ENCODE measurements at regions of chr3 and their contacts with region 1.

Region 1: DNA sequence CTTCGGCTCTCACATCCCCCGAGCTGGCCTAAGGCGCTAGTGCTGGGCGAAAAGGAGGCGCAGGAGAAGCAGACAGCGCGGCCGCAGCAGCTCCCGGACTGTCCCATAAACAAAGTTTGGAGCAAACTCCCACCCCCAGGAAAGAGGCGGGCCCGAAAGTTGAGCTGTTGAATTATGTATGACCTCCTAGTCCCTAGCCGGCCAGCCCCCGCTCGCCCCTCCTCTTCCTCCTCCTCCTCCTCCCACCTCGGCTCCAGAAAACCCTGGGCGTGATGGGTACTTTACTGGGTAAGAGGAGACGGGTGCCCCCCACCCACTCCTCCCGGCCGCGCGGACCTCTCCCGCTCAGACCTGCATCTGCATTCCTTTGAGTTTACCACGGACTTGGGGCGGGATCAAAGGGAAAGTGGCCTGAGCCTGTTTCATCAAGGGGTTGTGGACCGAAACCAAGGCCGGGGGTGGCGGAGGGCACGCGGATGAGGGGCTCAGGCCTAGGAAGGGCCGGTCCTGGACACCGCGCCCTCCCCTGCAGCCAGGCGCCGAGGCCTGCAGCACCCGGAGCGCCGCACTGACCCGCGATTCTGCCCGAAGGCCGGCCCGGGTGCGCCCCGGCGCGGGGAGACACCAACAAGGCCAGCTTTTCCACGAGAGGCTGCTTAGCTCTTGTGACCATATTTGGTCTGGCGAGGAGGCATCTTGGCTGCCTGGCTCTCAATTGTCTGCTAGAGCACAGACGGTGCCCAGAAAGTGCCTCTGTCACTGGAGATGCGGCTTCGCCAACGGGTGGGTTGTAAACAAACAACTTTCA is at the start of gene WWTR1:
- DNase-seq: peak; percentile 96 to 97
- H3K4me3 ChIP-seq: peak within 1 kb of the TSS; percentile 66 to 70 (median 68)
- H3K27ac ChIP-seq: peak within 1 kb of the TSS; percentile 98 to 100 (median 99)
- H3K4me1 ChIP-seq: peaks cover 32 to 35% of the 10 kb centered on the region in 2 donors
- H3K27me3 ChIP-seq: no peaks in the 10 kb centered on the region
- CTCF ChIP-seq: peak in 3 of 6 experiments; percentile 15 to 32 (median 19)
- POLR2A ChIP-seq: peak; percentile 90 to 99
- total RNA-seq, gene WWTR1: 56.7 to 87.6 (median 78.5) TPM

Region 2: GRCh38 chr3:149547938-149548668 is 110.0 kb before region 1 on chr3:
- intact Hi-C with region 1: loop called (anchors 10 kb)
- DNase-seq: peak; percentile 17 to 37
- H3K4me3 ChIP-seq: no peak overlapping the region
- H3K27ac ChIP-seq: peak overlapping the region in 2 of 3 donors; percentile 47 to 52
- H3K4me1 ChIP-seq: peaks cover 7 to 15% of the 10 kb centered on the region in 2 donors
- H3K27me3 ChIP-seq: no peaks in the 10 kb centered on the region
- CTCF ChIP-seq: no peak
- POLR2A ChIP-seq: no peak

Region 3: DNA sequence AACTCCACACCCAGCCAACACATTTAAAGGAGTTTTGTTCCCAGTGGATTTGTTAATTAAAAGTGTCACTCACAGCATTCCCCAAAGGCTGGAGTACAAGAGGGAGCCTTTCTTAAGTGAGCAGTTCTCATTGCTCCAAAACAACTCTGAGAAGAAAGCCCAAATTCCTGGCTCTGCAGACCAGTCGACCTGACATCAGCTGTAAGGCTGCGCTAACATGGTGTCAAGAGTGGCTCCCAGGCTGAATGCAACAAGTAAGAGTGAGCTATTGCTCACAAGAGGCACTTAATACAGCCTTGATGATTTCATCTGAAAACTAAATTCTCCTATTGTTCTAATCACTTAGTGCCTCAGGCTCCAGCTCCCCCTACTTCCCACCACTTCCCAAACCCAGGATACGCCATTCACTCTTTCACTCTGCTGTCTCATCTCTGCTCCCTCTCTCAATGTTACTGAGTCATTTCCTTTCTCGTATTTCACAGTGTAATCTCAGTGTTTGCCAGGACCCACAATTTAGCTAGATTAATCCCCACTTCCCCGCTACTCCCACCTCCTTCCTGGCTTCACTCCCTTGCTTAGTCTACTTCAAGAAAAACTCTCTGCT is 82.1 kb before region 1 on chr3:
- intact Hi-C with region 1: loop called (anchors 10 kb)
- DNase-seq: no peak
- H3K4me3 ChIP-seq: no peak overlapping the region
- H3K27ac ChIP-seq: peak overlapping the region; percentile 11 to 76 (median 70)
- H3K4me1 ChIP-seq: peaks cover 39 to 67% of the 10 kb centered on the region in 2 donors
- H3K27me3 ChIP-seq: no peaks in the 10 kb centered on the region
- CTCF ChIP-seq: no peak
- POLR2A ChIP-seq: no peak

Region 4: GRCh38 chr3:149609595-149609994 is 48.5 kb before region 1 on chr3:
- intact Hi-C with region 1: no loop called
- DNase-seq: no peak
- H3K4me3 ChIP-seq: no peak overlapping the region
- H3K27ac ChIP-seq: peak overlapping the region in 1 of 3 donors; percentile 5
- H3K4me1 ChIP-seq: peaks cover 9 to 24% of the 10 kb centered on the region in 2 donors
- H3K27me3 ChIP-seq: no peaks in the 10 kb centered on the region
- CTCF ChIP-seq: no peak
- POLR2A ChIP-seq: no peak

Region 5: DNA sequence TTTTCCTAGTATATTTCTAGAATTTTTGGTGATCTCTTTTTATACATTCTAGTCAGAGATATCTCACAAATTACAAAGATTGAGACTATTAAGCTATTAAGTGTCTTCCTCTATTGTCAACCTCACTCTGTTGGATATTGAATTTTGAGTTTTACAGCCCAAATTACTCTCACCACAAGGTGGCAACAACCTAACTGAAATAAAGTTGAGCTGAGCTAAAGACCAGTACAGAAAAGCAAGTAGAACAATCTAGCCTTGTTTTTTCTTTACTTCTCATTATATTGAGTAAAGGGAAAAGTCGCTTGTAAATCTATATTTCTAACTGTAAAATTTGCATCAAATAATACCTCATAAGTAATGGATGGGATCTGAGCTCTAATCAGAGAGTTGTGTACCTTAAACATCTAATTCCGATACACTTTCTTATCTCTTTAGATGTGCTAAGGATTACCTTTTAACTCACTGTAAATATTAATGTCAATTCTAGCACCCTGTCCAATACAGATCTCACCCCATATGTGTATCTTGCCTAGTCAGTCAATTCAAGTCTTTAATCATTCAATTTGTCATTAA is 107.7 kb after region 1 on chr3:
- intact Hi-C with region 1: no loop called
- DNase-seq: no peak
- H3K4me3 ChIP-seq: no peak overlapping the region
- H3K27ac ChIP-seq: no peak overlapping the region
- H3K4me1 ChIP-seq: no peaks in the 10 kb centered on the region
- H3K27me3 ChIP-seq: no peaks in the 10 kb centered on the region
- CTCF ChIP-seq: peak in 5 of 6 experiments; percentile 26 to 63 (median 50)
- POLR2A ChIP-seq: no peak